Psoas muscle (tissue), 8 donors: ENCODE measurements at regions of chr4 and their contacts with region 1.

Region 1: GRCh38 chr4:150867148-150867547 is 147.9 kb downstream of the LRBA start:
- DNase-seq: no peak
- ATAC-seq: peak; percentile 51 to 88 (median 80)
- H3K4me3 ChIP-seq: no peak overlapping the region
- H3K27ac ChIP-seq: no peak overlapping the region
- H3K4me1 ChIP-seq: no peaks in the 10 kb centered on the region
- H3K27me3 ChIP-seq: no peaks in the 10 kb centered on the region
- CTCF ChIP-seq: peak; percentile 74

Region 2: DNA sequence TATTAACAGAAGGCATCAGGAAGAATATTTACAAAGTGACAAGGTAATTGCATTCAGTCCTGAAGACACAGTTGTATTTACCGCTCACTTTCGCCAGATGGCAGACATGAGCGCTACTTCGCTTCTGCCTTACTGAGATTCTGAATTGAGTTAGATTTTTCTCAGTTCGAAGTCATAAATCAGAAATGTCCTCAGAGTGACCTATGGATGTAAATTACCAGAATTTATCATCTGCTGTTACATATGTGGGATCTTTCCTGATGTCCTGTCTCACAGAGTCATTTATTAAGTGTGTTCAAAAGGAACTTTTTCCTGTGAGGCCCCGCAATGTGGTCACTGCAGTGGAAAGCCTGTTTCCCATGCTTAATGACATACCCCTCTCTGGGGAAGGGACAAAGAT is 886.2 kb before region 1 on chr4:
- intact Hi-C with region 1: loop called (anchors 5 to 10 kb)
- DNase-seq: peak; percentile 21 to 52
- ATAC-seq: peak in 1 of 4 donors; percentile 71
- H3K4me3 ChIP-seq: no peak overlapping the region
- H3K27ac ChIP-seq: no peak overlapping the region
- H3K4me1 ChIP-seq: no peaks in the 10 kb centered on the region
- H3K27me3 ChIP-seq: no peaks in the 10 kb centered on the region
- CTCF ChIP-seq: peak; percentile 80

Region 3: GRCh38 chr4:150297861-150298474 is 569.2 kb before region 1 on chr4:
- intact Hi-C with region 1: loop called (anchors 2 to 5 kb)
- DNase-seq: no peak
- ATAC-seq: no peak
- H3K4me3 ChIP-seq: no peak overlapping the region
- H3K27ac ChIP-seq: no peak overlapping the region
- H3K4me1 ChIP-seq: no peaks in the 10 kb centered on the region
- H3K27me3 ChIP-seq: no peaks in the 10 kb centered on the region
- CTCF ChIP-seq: peak; percentile 62